B cell (primary cell): ENCODE measurements at regions of chr17 and their contacts with region 1.

Region 1: GRCh38 chr17:8435245-8436168 is at the start of gene NDEL1:
- DNase-seq: peak; percentile 98
- ATAC-seq: peak; percentile 94
- H3K4me3 ChIP-seq: peak within 1 kb of the TSS; percentile 77 to 91 (median 88)
- H3K4me3 Mint-ChIP-seq: peak within 1 kb of the TSS; percentile 98
- H3K27ac ChIP-seq: peak within 1 kb of the TSS; percentile 93 to 95
- H3K27ac Mint-ChIP-seq: peak within 1 kb of the TSS; percentile 98
- H3K4me1 ChIP-seq: peaks cover 20 to 23% of the 10 kb centered on the region in 2 donors
- H3K4me1 Mint-ChIP-seq: peaks cover 36% of the 10 kb centered on the region
- H3K27me3 ChIP-seq: no peaks in the 10 kb centered on the region
- H3K27me3 Mint-ChIP-seq: no peaks in the 10 kb centered on the region
- CTCF ChIP-seq: no peak
- total RNA-seq, gene NDEL1: 108 and 122 TPM in 2 replicates

Region 2: GRCh38 chr17:7014261-7014994 is 1421.1 kb before region 1 on chr17:
- CTCF ChIA-PET with region 1: no interaction called
- POLR2A ChIA-PET with region 1: no interaction called
- intact Hi-C with region 1: loop called (anchors 5 kb)
- DNase-seq: peak; percentile 99
- ATAC-seq: peak; percentile 81
- H3K4me3 ChIP-seq: peak overlapping the region; percentile 95 to 100 (median 96)
- H3K4me3 Mint-ChIP-seq: peak overlapping the region; percentile 99
- H3K27ac ChIP-seq: peak overlapping the region; percentile 97 to 99
- H3K27ac Mint-ChIP-seq: peak overlapping the region; percentile 100
- H3K4me1 ChIP-seq: peaks cover 40 to 59% of the 10 kb centered on the region in 2 donors
- H3K4me1 Mint-ChIP-seq: peaks cover 54% of the 10 kb centered on the region
- H3K27me3 ChIP-seq: no peaks in the 10 kb centered on the region
- H3K27me3 Mint-ChIP-seq: no peaks in the 10 kb centered on the region
- CTCF ChIP-seq: peak; percentile 76

Region 3: GRCh38 chr17:8409966-8410864 is 25.3 kb before region 1 on chr17:
- CTCF ChIA-PET with region 1: interaction called, 9 read pairs
- POLR2A ChIA-PET with region 1: no interaction called
- intact Hi-C with region 1: loop called (anchors 2 kb)
- DNase-seq: peak; percentile 85
- ATAC-seq: peak; percentile 76
- H3K4me3 ChIP-seq: no peak overlapping the region
- H3K4me3 Mint-ChIP-seq: no peak overlapping the region
- H3K27ac ChIP-seq: no peak overlapping the region
- H3K27ac Mint-ChIP-seq: peak overlapping the region; percentile 50
- H3K4me1 ChIP-seq: peaks cover 0 to 5% of the 10 kb centered on the region in 2 donors
- H3K4me1 Mint-ChIP-seq: peaks cover 4% of the 10 kb centered on the region
- H3K27me3 ChIP-seq: peaks cover 0 to 19% (median 4%) of the 10 kb centered on the region in 4 experiments
- H3K27me3 Mint-ChIP-seq: peaks cover 21% of the 10 kb centered on the region
- CTCF ChIP-seq: peak; percentile 95

Region 4: DNA sequence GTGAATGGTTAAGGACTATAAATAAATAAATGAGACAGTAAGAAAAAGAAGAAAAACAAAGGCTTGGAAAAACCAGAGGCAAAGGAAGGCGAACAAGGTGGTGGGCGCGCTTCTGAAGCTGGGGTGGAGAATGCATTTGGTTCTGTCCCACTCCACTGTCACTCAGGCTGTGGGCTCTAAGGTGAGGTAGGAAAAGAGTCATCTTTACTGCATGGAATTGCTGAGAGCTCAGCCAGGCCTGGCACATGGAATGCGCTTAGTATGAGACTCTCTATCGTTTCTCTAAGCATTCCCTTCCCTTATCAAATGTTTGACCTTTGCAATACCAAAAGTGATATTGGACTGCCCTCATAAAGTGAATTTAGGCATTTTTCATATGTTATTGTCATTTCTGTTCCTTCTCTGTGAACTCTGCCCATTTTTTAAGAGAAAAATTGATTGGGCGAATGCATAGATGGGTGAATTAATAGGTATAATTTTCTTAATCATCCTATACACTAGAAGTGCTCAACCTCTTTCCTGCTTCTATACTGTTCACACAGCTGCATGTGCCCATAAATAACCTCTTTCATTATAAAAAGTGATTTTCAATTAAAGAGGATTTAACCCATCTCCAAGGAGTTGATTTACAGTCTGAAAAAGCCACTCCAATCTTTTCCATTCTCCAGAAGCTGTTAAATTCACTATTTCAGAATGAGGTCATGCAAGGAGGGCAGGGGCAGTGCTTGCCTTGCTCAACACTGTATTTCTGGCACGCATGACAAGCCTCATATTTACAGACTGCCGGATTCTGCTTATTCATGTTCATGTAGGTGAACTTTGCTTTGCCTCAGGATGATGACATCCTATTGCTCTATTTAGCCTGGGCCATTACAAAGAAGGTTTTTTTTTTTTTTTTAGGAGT is 107.3 kb after region 1 on chr17:
- CTCF ChIA-PET with region 1: no interaction called
- POLR2A ChIA-PET with region 1: no interaction called
- intact Hi-C with region 1: no loop called
- DNase-seq: no peak
- ATAC-seq: no peak
- H3K4me3 ChIP-seq: no peak overlapping the region
- H3K4me3 Mint-ChIP-seq: no peak overlapping the region
- H3K27ac ChIP-seq: no peak overlapping the region
- H3K27ac Mint-ChIP-seq: no peak overlapping the region
- H3K4me1 ChIP-seq: no peaks in the 10 kb centered on the region
- H3K4me1 Mint-ChIP-seq: no peaks in the 10 kb centered on the region
- H3K27me3 ChIP-seq: no peaks in the 10 kb centered on the region
- H3K27me3 Mint-ChIP-seq: no peaks in the 10 kb centered on the region
- CTCF ChIP-seq: no peak

Region 5: GRCh38 chr17:8630802-8631553 is 195.5 kb after region 1 on chr17:
- CTCF ChIA-PET with region 1: no interaction called
- POLR2A ChIA-PET with region 1: no interaction called
- intact Hi-C with region 1: loop called (anchors 5 kb)
- DNase-seq: peak; percentile 93
- ATAC-seq: peak; percentile 95
- H3K4me3 ChIP-seq: peak overlapping the region; percentile 2 to 85 (median 69)
- H3K4me3 Mint-ChIP-seq: peak overlapping the region; percentile 97
- H3K27ac ChIP-seq: peak overlapping the region in 1 of 2 donors; percentile 41
- H3K27ac Mint-ChIP-seq: peak overlapping the region; percentile 67
- H3K4me1 ChIP-seq: peaks cover 17 to 23% of the 10 kb centered on the region in 2 donors
- H3K4me1 Mint-ChIP-seq: peaks cover 21% of the 10 kb centered on the region
- H3K27me3 ChIP-seq: peaks cover 0 to 40% (median 32%) of the 10 kb centered on the region in 4 experiments
- H3K27me3 Mint-ChIP-seq: peaks cover 50% of the 10 kb centered on the region
- CTCF ChIP-seq: peak; percentile 16